AG04449 (cell line): ENCODE measurements at regions of chr9 and their contacts with region 1.

Region 1: GRCh38 chr9:130866474-130866965 is 30.1 kb downstream of the QRFP start:
- DNase-seq: peak; percentile 42
- H3K4me3 ChIP-seq: peak overlapping the region; percentile 45
- CTCF ChIP-seq: peak; percentile 84

Region 2: DNA sequence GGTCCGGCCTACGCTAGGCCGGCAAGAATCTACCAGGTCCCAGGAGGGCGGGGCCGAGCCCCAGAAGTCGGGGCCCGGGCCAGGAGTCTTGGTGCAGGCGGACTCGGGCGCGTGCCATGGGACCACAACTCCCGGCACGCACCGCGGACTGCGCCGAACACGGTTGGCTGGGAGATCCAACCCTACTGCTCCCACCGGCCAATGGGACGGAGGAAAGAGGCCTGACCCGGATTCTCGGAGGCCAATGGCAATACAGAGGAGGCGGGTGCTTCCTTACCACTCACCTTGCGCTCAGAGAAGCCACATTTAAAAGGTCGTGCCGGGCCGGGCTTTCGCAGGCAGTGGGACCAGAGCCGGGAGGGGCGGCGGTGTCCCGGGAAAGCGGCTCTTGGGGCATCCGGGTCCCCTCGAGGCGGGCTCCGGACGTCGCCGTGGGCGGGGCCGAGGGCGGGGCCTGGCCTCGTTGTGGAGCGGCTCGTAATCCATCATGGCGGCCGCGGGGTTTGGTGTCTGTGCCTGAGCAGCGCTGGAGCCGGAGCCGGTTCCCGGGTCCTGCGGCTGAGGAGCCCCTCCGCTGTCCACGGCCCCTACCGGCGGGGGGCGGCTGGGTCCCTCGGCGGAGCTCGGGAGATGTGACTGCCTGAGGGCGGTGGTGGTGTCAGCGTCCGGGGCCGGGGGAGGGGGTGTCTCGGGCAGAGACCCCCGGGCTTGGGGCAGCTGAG is 153.8 kb before region 1 on chr9:
- CTCF ChIA-PET with region 1: interaction called, 786 read pairs
- POLR2A ChIA-PET with region 1: interaction called, 3 read pairs
- DNase-seq: peak; percentile 88
- H3K4me3 ChIP-seq: peak overlapping the region; percentile 79
- CTCF ChIP-seq: no peak

Region 3: GRCh38 chr9:130770679-130771442 is 95.7 kb before region 1 on chr9:
- CTCF ChIA-PET with region 1: interaction called, 311 read pairs
- POLR2A ChIA-PET with region 1: no interaction called
- DNase-seq: peak; percentile 37
- H3K4me3 ChIP-seq: no peak overlapping the region
- CTCF ChIP-seq: peak; percentile 41

Region 4: GRCh38 chr9:130854092-130854491 is 12.4 kb before region 1 on chr9:
- CTCF ChIA-PET with region 1: interaction called, 85 read pairs
- POLR2A ChIA-PET with region 1: no interaction called
- DNase-seq: no peak
- H3K4me3 ChIP-seq: no peak overlapping the region
- CTCF ChIP-seq: no peak

Region 5: GRCh38 chr9:130893341-130894101 is 27.0 kb after region 1 on chr9:
- CTCF ChIA-PET with region 1: interaction called, 12 read pairs
- POLR2A ChIA-PET with region 1: no interaction called
- DNase-seq: no peak
- H3K4me3 ChIP-seq: no peak overlapping the region
- CTCF ChIP-seq: peak; percentile 24

Region 6: GRCh38 chr9:130906735-130907416 is 40.4 kb after region 1 on chr9:
- CTCF ChIA-PET with region 1: no interaction called
- POLR2A ChIA-PET with region 1: no interaction called
- DNase-seq: no peak
- H3K4me3 ChIP-seq: no peak overlapping the region
- CTCF ChIP-seq: no peak

Region 7: DNA sequence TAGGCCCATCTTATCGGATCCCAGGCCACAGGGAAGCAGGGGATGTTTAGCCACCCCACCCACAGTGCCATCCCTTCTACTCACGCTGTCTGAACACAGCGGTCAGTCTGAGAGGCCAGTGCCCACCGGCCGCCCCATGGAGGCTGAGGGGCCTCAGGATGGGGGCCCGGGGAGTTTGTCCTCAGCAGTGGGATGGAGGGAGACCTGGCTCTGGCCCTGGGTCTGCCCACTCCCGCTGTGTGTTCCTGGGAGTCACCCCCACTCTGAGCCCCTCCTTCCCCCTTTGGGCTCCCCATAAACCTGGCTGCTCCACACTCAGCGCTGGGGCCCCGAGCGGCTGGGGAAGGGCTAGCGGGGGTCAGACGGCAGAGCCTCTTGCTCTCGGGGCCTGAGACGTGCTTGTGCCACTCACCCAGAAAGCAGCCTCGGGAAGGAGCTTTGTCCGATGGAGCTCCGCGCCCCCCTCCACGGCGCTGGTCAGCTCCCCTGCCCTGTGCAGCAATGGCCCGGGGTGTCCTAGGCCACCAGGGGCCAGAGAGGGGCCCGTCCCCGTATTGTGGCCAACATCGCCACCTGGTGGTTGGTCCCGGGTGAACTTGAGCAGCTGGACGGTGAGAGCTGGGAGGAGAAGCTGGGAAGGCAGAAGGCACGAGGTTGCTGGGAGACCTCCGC is 131.5 kb after region 1 on chr9:
- CTCF ChIA-PET with region 1: interaction called, 235 read pairs
- POLR2A ChIA-PET with region 1: no interaction called
- DNase-seq: no peak
- H3K4me3 ChIP-seq: no peak overlapping the region
- CTCF ChIP-seq: peak; percentile 83

Region 8: DNA sequence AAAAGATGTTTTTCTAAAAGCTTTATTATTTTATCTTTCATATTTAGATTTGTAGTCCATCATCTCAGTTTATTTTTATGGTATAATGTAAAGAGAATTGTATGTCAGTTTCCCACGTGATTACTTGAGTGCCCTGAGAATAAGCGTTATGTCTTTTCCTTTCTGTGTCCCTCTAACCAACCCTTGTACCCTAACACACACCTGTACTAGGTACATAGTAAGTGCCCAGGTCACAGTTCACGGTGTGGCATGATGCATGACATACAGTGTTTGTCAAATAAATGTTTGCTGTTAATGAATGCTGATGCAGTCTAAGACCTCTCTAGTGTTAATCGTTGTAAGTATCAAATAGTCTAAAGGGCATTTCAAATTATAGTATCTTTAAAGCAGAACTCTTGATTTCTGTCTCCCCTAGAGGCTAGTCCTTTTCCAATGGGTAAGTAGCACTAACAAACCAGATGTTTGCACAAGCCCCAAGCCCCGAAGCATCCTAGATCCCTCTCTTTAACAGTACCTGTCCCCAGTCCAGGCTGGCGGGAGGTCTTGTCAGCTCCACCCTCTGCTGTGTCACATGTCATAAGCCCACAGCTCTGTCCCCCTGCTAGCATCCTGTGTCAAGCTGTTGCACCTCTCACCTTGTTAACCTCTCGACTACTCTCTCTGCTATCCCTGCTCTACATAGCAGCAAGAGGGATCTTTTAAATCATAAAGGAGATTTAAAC is 282.6 kb after region 1 on chr9:
- CTCF ChIA-PET with region 1: no interaction called
- POLR2A ChIA-PET with region 1: no interaction called
- DNase-seq: no peak
- H3K4me3 ChIP-seq: no peak overlapping the region
- CTCF ChIP-seq: no peak